GM10248 (cell line): ENCODE measurements at regions of chr7 and their contacts with region 1.

Region 1: GRCh38 chr7:94239661-94240234 is 154.9 kb upstream of the COL1A2 start:
- DNase-seq: no peak
- CTCF ChIP-seq: no peak

Region 2: DNA sequence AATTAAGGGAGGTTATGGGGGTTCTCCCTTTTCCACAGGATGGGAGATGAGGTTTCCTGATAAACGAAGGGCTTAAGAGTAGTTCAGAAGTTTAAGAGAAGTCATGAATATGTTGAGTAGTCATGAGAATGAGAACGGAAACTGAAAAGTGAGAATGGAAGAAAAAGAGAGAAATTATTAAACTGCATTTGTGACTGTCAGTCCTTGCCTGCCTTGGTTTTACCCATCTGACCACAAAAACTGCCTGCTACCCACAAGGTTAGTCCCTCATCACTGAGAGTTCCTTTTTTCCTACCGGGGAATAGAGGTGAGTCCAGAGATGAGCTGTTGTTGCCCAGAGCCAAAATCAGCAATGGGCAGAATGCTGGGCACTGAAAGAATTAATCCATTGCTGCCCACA is 61.5 kb before region 1 on chr7:
- CTCF ChIA-PET with region 1: no interaction called
- POLR2A ChIA-PET with region 1: no interaction called
- DNase-seq: peak; percentile 17
- CTCF ChIP-seq: no peak

Region 3: GRCh38 chr7:94205529-94205928 is 34.2 kb before region 1 on chr7:
- CTCF ChIA-PET with region 1: no interaction called
- POLR2A ChIA-PET with region 1: no interaction called
- DNase-seq: no peak
- CTCF ChIP-seq: no peak

Region 4: DNA sequence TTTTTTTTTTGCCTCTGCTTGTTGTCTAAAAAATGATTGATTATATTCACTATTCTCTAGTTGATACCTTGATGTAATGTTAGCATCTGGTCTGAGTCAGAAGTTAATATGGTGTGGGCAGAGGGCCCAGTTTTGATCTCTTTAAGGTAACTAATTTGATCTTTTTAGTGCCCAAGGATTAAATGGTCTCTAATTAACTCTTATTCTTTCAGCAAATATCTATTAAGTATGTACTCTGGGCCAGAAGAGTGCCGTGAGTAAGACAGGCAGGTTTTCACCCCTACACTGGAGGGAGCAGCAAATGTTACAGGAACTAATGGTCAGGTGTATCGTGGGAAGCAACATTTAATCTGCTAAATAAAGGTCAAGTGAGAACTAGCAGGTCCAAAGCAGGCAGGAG is 10.4 kb after region 1 on chr7:
- CTCF ChIA-PET with region 1: interaction called, 10 read pairs
- POLR2A ChIA-PET with region 1: no interaction called
- DNase-seq: no peak
- CTCF ChIP-seq: no peak